ENCODE measurements at regions of chr5 and their contacts with region 1.

Region 1: DNA sequence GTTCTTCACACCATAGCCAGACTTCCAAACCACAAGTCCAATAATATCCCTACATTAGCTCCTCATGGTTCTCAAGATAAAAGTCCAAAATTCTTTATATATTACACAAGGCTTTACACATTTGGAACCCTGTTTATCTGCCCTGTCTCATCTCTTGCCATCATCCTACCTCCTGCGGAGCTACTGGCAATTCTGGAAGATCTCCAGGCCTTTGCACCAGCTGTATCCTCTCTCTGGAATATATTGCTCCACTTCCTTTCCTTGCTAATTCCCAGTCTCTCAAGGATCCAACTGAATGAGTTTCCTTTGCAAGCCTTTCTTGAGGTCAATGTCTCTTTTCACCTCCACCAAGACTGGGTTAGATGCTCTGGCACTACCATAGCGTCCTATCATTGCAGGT is 41.3 kb upstream of the MIER3 start:
- DNase-seq: no peak
- H3K4me3 ChIP-seq: no peak overlapping the region
- H3K27ac ChIP-seq: no peak overlapping the region
- H3K4me1 ChIP-seq: no peaks in the 10 kb centered on the region
- H3K27me3 ChIP-seq: peaks cover 3% of the 10 kb centered on the region
- CTCF ChIP-seq: no peak

Region 2: GRCh38 chr5:57063773-57064172 is 70.5 kb after region 1 on chr5:
- CTCF ChIA-PET with region 1: no interaction called
- dilution Hi-C with region 1: loop called (anchors 5 kb)
- in situ Hi-C with region 1: no loop called
- intact Hi-C with region 1: no loop called
- DNase-seq: no peak
- H3K4me3 ChIP-seq: no peak overlapping the region
- H3K27ac ChIP-seq: no peak overlapping the region
- H3K4me1 ChIP-seq: peaks cover 8% of the 10 kb centered on the region
- H3K27me3 ChIP-seq: no peaks in the 10 kb centered on the region
- CTCF ChIP-seq: no peak